Dendritic cell treated with granulocyte-macrophage colony-stimulating factor and Interleukin-4, amounts not matched to agents 40 ng/mL and 50 ng/mL, for 4 days (primary cell): ENCODE measurements at regions of chr7 and their contacts with region 1.

Region 1: DNA sequence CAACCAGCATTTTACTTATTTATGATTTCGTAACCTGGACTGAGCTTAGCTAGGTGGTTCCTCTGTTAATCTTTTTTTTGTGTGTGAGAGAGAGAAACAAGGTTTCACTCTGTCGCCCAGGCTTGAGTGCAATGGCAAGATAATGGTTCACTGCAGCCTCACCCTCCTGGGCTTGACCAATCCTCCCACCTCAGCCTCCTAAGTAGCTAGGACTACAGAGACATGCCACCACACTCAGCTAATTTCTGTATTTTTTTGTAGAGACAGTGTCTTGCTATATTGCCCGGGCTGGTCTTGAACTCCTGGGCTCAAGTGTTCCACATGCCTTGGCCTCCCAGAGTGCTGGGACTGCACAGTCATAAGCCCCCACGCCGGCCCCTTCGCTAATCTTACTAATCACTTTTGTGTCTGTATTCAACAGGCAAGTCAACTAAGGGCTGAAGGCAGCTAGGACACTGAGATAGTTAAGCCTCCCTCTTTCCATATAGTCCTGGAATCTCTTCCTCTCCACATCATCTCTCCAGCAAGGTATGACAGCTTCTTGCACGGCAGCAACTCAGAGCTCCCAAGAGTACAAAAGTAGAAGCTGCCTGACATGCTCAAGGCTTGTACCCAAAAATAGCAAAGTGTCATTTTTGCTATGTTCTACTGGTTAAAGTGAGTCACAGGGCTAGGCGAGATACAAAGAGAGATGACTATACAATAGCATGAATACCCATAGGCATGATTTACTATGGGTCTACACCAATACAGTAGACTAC is 11.3 kb downstream of the KMT2C start:
- H3K4me3 Mint-ChIP-seq: no peak overlapping the region
- H3K27ac Mint-ChIP-seq: no peak overlapping the region
- H3K4me1 Mint-ChIP-seq: peaks cover 69% of the 10 kb centered on the region
- H3K27me3 Mint-ChIP-seq: no peaks in the 10 kb centered on the region

Region 2: DNA sequence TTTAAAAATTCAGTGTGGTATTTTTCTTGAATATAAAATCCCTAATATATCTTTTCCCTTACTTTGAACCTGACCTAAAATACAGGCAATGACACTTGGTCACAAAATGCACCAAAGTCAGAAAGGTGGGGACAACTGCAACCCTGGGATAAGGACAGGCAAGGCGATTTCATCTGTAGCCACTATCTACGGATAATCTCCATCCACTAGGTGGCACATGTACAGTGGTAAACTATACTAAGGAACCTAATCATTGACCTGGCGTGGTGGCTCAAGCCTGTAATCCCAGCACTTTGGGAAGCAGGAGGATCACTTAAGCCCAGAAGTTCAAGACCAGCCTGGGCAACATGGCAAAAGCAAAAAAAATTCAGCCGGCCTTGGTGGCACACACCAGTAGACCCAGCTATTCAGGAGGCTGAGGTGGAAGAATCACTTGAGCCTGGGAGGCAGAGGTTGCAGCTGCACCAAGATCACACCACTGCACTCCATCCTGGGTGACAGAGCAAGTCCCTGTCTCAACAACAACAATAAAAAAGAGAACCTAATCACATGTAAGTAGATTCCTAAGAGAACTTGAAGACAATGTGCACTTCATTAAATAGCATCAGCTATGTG is 87.7 kb before region 1 on chr7:
- intact Hi-C with region 1: loop called (anchors 10 kb)
- H3K4me3 Mint-ChIP-seq: no peak overlapping the region
- H3K27ac Mint-ChIP-seq: no peak overlapping the region
- H3K4me1 Mint-ChIP-seq: peaks cover 56% of the 10 kb centered on the region
- H3K27me3 Mint-ChIP-seq: no peaks in the 10 kb centered on the region

Region 3: DNA sequence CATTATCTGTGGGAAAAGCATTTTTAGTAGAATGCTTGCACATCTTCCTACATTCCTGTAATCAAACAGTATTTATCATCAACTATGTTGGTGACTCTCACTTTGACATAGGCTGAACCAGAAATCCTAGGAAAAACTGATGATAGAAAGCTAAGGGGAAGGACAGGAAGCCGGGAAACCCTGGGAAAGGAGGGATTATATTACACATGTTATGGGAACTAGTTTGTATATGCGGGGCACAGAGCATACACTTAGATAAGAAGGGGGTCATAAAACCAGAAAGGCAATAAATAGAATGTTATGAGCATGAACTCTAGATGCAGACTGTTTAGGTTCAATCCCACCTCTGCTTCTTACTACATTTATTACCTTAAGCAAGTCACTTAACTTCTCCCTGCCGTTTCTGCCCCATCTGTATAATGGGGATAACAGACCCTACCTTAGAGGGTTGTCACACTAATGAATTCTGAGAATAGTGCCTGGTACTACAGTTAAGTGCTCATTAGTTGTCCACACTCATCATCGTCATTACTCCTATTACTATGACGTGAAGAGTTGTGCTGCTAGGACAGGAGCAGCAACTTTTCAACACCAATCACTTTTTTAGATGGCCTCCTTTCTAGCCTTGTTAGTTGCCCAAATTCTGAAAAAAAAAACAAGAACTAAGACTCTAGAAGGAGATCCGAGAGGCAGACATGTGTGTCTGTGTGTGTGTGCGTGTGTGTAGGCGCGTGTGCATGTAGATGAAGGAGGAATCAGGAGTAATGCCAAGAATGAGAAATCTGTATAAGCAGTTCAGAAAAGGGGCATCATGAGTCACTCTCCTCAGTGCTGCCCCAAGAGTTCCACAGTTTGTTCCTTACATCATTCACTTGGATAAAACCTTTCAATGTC is 40.9 kb before region 1 on chr7:
- intact Hi-C with region 1: loop called (anchors 5 kb)
- H3K4me3 Mint-ChIP-seq: no peak overlapping the region
- H3K27ac Mint-ChIP-seq: no peak overlapping the region
- H3K4me1 Mint-ChIP-seq: peaks cover 16% of the 10 kb centered on the region
- H3K27me3 Mint-ChIP-seq: no peaks in the 10 kb centered on the region